Activated CD4-positive, alpha-beta memory T cell treated with anti-CD3 and anti-CD28 coated beads for 36 hours (primary cell): ENCODE measurements at regions of chrX and their contacts with region 1.

Region 1: GRCh38 chrX:39730662-39731397 is 366.9 kb downstream of the BCOR start:
- DNase-seq: peak; percentile 72
- H3K4me3 Mint-ChIP-seq: no peak overlapping the region
- H3K27ac Mint-ChIP-seq: peak overlapping the region; percentile 59
- H3K4me1 Mint-ChIP-seq: peaks cover 12% of the 10 kb centered on the region
- H3K27me3 Mint-ChIP-seq: no peaks in the 10 kb centered on the region

Region 2: GRCh38 chrX:39772057-39772832 is 41.4 kb after region 1 on chrX:
- CTCF ChIA-PET with region 1: interaction called, 3 read pairs
- POLR2A ChIA-PET with region 1: no interaction called
- intact Hi-C with region 1: loop called (anchors 5 kb)
- DNase-seq: peak; percentile 86
- H3K4me3 Mint-ChIP-seq: peak overlapping the region; percentile 55
- H3K27ac Mint-ChIP-seq: peak overlapping the region; percentile 98
- H3K4me1 Mint-ChIP-seq: peaks cover 48% of the 10 kb centered on the region
- H3K27me3 Mint-ChIP-seq: no peaks in the 10 kb centered on the region

Region 3: DNA sequence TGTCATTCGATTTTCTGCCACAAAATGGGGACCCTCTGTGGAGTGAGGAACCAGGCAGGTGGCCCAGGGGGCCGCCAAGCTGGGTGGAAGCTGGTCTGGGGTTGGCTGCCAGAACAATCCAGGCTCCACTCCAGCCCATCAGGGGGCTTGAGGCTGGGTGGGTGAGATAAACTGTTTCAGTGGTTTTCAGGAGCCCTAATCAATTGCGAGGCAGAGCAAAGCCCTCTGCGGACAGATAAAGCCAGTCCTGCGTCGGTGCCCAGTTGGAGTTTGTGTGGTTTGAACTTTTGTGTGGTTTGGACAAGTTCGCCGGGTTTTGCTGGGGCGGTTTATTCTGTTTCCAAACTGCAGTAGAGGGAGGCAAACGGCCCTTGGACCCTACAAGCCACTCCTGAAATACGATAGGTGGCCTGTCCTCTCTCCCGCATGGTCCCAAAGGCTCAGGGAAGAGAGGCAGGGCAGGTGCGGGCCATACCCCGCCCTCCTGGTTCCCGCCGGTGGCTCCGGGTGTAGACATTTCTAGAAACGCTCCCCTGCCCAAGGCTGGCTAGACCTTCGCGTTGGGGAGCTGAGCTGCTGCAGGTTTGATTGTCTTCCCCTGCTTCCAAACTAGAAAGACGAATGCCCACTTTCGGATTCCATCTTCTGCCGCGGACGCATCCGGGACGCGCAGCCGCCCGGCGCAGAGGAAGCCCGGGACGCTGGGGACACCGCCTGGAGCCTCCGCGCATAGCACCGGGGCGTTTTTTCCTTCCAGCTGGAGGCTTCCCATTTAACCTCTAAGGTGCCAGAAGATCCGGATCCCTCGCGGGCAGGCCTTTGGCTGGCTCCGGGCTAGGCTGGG is 535.9 kb after region 1 on chrX:
- CTCF ChIA-PET with region 1: no interaction called
- POLR2A ChIA-PET with region 1: no interaction called
- intact Hi-C with region 1: loop called (anchors 2 kb)
- DNase-seq: peak; percentile 70
- H3K4me3 Mint-ChIP-seq: peak overlapping the region; percentile 70
- H3K27ac Mint-ChIP-seq: no peak overlapping the region
- H3K4me1 Mint-ChIP-seq: no peaks in the 10 kb centered on the region
- H3K27me3 Mint-ChIP-seq: no peaks in the 10 kb centered on the region

Region 4: DNA sequence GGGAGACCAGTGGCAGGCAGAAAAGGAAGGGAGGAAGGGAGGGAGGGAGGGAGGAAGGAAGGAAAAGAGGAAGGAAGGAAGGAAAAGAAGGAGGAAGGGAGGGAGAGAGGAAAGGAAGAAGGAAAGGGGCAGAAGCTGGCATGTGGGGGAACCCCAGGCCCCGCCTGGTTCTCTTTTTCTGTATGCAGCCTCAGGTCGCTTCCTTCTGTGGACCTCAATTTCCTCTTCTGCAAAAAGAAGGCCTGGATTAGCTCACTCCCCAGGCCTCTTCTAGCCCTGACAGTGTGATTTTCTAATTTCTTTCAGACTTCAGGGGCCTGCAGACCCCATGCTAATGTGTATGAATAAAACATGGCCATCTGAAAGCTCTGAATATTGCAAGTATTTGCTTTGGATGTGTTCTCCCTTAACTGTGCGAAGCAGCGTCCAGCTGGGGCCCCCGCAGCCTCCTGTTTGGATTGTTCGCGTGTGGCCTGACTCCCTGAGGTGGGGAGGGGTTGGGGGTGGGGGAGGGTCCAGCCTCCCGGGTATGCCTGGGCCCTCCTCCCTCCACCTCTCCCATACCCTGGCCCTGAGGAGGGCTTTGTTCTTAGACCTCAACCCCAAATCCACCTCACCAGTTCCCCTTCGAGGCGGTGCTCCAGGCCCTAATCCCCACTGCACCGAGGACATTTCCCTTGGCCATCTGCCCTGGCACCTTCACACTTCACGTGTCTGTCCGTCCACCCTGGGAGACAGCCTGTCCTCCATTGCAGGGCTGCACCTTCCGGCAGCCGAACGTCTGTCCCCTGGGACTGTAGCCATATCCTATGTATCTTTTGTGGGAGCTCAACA is 650.0 kb after region 1 on chrX:
- CTCF ChIA-PET with region 1: no interaction called
- POLR2A ChIA-PET with region 1: no interaction called
- intact Hi-C with region 1: no loop called
- DNase-seq: no peak
- H3K4me3 Mint-ChIP-seq: no peak overlapping the region
- H3K27ac Mint-ChIP-seq: no peak overlapping the region
- H3K4me1 Mint-ChIP-seq: no peaks in the 10 kb centered on the region
- H3K27me3 Mint-ChIP-seq: no peaks in the 10 kb centered on the region